GM13976 (cell line): ENCODE measurements at regions of chr10 and their contacts with region 1.

Region 1: DNA sequence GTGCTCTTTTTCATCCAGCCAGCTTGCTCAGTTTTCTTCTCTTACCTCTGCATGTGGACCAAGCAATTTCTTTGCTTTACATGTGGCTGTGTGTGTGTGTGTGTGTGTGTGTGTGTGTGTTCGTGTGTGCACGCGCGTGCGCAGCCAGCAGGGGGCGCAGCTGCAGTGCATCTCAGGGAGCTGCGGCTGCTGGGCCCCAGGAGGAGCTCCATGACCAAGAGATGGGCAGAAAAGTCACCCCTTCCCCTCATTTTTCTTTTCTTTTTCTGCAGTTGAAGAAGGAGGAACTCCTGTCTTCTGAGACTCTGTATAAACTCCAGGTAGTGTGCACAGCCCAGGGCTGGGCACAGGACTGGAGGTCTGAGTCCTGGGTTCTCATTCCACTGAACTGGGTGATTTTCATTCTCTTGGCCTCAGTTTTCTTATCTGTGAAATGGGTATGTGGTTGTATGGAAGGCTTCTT is 41.8 kb downstream of the BLNK start:
- DNase-seq: peak; percentile 83
- CTCF ChIP-seq: peak; percentile 93

Region 2: GRCh38 chr10:96025566-96025965 is 204.0 kb before region 1 on chr10:
- in situ Hi-C with region 1: loop called (anchors 10 kb)
- DNase-seq: no peak
- CTCF ChIP-seq: peak; percentile 7

Region 3: DNA sequence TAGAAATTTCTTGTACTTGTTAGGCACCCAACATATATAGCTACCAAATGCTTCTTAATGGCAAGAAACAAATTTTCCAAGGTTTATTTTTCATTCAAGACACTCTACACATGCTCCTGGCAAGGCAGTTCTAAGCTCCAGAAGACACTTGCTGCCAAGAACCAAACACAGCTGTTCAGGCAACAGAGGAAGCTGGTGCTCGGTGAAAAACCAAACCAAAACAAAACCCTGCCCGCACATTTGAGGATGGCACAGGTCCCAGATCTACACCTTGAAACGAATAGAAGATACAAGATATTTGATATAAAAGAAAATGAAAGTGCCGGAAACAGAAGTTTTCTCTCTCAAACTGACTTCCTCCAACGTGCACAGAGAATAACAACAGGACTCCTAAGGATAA is 69.8 kb after region 1 on chr10:
- in situ Hi-C with region 1: loop called (anchors 5 kb)
- DNase-seq: no peak
- CTCF ChIP-seq: no peak